SK-N-SH (cell line): ENCODE measurements at regions of chr5 and their contacts with region 1.

Region 1: DNA sequence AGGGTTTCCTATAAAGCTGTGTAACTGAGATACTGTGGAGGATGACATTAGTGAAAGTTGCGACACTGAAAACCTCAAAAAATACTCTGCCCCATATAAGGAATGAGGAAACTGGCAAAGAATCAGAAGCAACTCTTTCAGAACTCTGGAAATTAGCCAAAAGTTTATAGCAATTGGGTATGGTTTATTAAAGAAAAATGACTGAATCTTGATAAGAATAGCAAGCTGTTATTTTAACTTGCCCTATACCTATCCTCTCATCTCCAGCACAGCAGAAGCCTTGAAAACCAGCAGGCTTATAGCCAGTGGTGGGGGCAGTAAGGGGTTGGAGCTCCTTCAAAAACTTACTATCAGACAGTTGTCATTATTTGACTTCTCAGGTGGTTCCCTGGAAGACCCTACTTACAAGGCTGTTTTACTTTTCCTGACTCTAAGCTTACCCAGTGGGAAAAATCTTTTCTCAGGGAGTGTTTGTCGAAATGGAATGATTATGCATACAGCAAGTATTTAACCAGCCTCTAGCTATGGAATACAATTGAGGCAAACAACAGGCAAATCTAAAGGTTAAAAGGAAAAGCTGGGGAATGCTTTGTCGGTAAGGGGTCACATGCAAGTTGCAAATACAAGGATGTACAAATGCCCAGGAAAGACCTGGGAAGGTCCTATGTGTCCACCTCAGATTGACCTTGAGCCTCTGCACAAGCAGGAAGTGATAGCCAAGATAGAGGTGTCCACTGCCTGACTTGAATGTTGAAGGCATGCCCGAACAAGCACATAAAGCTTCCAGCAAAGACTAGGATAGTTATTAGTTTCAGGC is 21.0 kb upstream of the FAM151B start:
- DNase-seq: no peak
- H3K4me3 ChIP-seq: no peak overlapping the region
- H3K27ac ChIP-seq: peak overlapping the region in 1 of 2 experiments; percentile 24; a peak in 2 of 4 replicates
- H3K4me1 ChIP-seq: no peaks in the 10 kb centered on the region
- H3K27me3 ChIP-seq: no peaks in the 10 kb centered on the region
- CTCF ChIP-seq: no peak
- EP300 ChIP-seq: no peak
- RAD21 ChIP-seq: no peak

Region 2: GRCh38 chr5:80481019-80481893 is 14.4 kb after region 1 on chr5:
- CTCF ChIA-PET with region 1: interaction called, 14 read pairs
- POLR2A ChIA-PET with region 1: no interaction called
- DNase-seq: peak; percentile 28
- H3K4me3 ChIP-seq: no peak overlapping the region; a peak in 1 of 4 replicates
- H3K27ac ChIP-seq: no peak overlapping the region
- H3K4me1 ChIP-seq: no peaks in the 10 kb centered on the region
- H3K27me3 ChIP-seq: no peaks in the 10 kb centered on the region
- CTCF ChIP-seq: peak; percentile 61
- EP300 ChIP-seq: no peak
- RAD21 ChIP-seq: peak; percentile 54